ENCODE measurements at regions of chr19 and their contacts with region 1.

Region 1: GRCh38 chr19:48634424-48635197 is 2.6 kb downstream of the DBP start:
- DNase-seq: peak; percentile 84
- CTCF ChIP-seq: no peak

Region 2: GRCh38 chr19:48618916-48619691 is 15.5 kb before region 1 on chr19 and contains the starts of genes RPL18 and SPHK2:
- CTCF ChIA-PET with region 1: interaction called, 20 read pairs
- POLR2A ChIA-PET with region 1: interaction called, 16 read pairs
- DNase-seq: peak; percentile 98
- CTCF ChIP-seq: peak; percentile 6

Region 3: DNA sequence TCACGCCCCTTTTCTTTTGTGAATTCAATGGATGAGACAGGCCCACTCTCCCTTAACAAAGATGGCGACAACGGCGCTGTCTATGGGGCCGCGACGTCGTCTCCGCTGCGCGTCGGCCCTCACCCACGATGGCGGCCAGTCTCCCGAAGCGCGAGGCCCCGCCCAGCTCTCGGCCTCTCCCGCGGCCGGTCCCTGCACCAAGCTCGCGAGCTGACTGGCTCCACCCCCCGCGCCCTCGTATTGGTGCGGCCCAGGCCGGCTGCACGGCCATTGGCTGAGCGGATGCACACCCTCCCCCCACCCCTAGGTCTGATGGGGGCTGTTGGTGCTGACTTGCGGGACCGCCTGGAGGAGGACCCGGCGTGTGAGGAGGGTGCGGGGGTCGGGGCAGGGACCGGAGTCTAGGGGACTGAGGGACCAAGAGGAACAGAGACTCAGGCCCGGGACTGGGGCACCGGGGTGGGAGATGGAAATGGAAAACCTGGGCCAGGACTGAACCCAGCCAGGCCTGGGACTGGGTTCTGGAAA is 10.5 kb before region 1 on chr19:
- CTCF ChIA-PET with region 1: interaction called, 20 read pairs
- POLR2A ChIA-PET with region 1: interaction called, 16 read pairs
- DNase-seq: peak; percentile 96
- CTCF ChIP-seq: no peak

Measured in GM10248 (cell line).